ENCODE measurements at regions of chr2 and their contacts with region 1.

Region 1: GRCh38 chr2:207754498-207755383 is 15.0 kb downstream of the FZD5 start:
- DNase-seq: no peak
- ATAC-seq: no peak
- H3K4me3 ChIP-seq: no peak overlapping the region
- H3K27ac ChIP-seq: no peak overlapping the region
- H3K4me1 ChIP-seq: no peaks in the 10 kb centered on the region
- H3K27me3 ChIP-seq: no peaks in the 10 kb centered on the region
- CTCF ChIP-seq: no peak

Region 2: DNA sequence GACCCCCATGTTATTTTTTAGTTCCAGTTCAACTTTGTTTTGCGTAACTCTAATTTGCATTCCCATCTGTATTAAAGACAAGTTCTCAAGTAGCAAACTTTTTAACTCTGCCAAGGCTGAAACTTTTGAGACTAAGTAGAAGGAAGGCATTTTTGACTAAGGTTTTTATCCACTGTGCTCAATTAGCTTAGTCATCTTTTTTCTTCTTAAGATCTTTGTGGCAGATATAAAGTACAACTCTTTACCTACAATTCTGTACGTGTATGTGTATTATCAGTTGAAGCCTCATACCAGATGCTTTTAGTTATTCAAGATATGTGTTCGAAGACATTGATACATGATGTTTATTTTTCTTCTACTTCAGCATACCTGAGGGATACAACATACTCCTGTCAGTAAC is 183.4 kb before region 1 on chr2:
- CTCF ChIA-PET with region 1: no interaction called
- POLR2A ChIA-PET with region 1: no interaction called
- intact Hi-C with region 1: no loop called
- DNase-seq: no peak
- ATAC-seq: no peak
- H3K4me3 ChIP-seq: no peak overlapping the region
- H3K27ac ChIP-seq: no peak overlapping the region
- H3K4me1 ChIP-seq: no peaks in the 10 kb centered on the region
- H3K27me3 ChIP-seq: no peaks in the 10 kb centered on the region
- CTCF ChIP-seq: no peak

Region 3: GRCh38 chr2:208000701-208001395 is 246.1 kb after region 1 on chr2:
- CTCF ChIA-PET with region 1: no interaction called
- POLR2A ChIA-PET with region 1: interaction called, 10 read pairs
- intact Hi-C with region 1: no loop called
- DNase-seq: peak; percentile 13
- ATAC-seq: peak; percentile 42; the same call in 1 of the 2 replicates
- H3K4me3 ChIP-seq: no peak overlapping the region
- H3K27ac ChIP-seq: no peak overlapping the region
- H3K4me1 ChIP-seq: no peaks in the 10 kb centered on the region
- H3K27me3 ChIP-seq: no peaks in the 10 kb centered on the region
- CTCF ChIP-seq: no peak

Measured in PC-3 (cell line).